ENCODE measurements at regions of chr2 and their contacts with region 1.

Region 1: GRCh38 chr2:145874466-145874865 is 1354.5 kb upstream of the ZEB2 start:
- DNase-seq: peak; percentile 16
- H3K4me3 ChIP-seq: no peak overlapping the region
- H3K27ac ChIP-seq: no peak overlapping the region
- H3K27me3 ChIP-seq: no peaks in the 10 kb centered on the region
- CTCF ChIP-seq: no peak

Region 2: DNA sequence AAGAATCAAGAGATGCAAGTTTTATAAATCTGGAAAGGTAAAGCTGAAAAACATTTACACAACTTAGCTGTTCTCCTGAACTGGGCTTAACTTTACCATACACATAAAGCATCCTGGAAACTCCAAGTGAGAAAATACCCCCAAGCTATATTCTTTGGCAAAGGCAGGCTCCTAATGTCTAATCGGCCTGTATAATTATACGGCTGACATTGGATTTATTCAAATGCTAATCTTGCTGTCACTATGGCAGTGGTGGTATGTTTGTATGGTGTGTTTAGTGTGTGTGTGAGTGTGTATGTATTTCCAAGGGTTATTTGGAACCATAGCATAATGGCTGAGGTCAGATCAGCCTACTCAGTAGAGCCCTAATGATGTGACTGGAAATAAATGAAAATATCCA is 322.8 kb before region 1 on chr2:
- CTCF ChIA-PET with region 1: no interaction called
- POLR2A ChIA-PET with region 1: no interaction called
- DNase-seq: no peak
- H3K4me3 ChIP-seq: no peak overlapping the region
- H3K27ac ChIP-seq: no peak overlapping the region
- H3K27me3 ChIP-seq: no peaks in the 10 kb centered on the region
- CTCF ChIP-seq: no peak

Region 3: DNA sequence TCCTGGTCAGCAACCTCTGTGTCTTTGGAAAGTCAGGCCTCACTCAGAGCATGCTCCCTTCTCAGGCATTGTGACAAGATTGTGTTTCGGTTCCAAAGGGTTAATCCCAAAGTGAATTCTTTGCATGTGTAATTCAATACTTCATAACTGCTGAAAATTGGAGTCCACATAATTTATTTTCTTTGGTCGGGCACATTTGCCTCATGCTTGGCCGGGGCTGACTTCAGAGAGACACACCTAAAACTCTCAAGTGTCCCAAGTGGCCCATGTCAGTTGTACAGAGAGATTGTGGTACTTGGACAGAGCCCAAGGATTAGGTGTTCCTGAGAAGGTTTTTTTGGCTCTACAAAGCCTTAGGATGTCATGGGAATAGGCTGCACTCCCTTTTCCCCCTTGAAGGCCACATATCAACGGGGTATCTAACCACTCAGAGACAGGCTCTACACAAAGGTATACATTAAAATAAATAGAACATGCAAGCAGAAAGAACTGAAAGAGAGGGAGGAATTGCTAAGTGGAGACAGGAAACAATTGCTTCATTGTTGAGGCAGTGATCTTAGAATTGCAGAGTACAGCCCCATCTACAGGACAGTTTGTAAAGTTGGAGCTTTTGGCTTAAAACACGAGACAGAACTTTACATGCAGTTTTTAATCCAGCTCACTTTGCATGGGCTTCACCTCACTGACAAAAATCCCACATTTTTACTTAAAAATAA is 122.2 kb before region 1 on chr2:
- CTCF ChIA-PET with region 1: no interaction called
- POLR2A ChIA-PET with region 1: no interaction called
- DNase-seq: peak; percentile 69
- H3K4me3 ChIP-seq: no peak overlapping the region
- H3K27ac ChIP-seq: no peak overlapping the region
- H3K27me3 ChIP-seq: no peaks in the 10 kb centered on the region
- CTCF ChIP-seq: peak; percentile 81

Region 4: DNA sequence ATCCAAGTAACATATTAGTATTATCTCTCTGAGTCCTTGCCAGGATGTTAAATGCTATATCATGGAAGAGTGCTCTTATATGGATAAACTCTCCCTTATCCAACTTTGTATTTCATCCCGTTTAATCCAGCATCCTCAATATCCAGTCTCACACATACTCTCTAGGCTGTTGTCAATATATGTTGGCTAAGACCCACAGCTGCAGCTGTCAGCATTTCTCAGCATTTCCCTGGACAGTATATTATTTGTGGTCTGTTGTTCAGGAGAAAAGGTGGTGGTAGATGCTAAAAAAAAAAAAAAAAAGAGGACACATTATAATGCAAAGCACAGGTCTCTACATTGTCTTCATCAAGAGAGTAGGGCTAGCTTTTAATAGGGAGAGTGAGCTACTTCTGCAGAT is 13.4 kb after region 1 on chr2:
- CTCF ChIA-PET with region 1: no interaction called
- POLR2A ChIA-PET with region 1: no interaction called
- DNase-seq: no peak
- H3K4me3 ChIP-seq: no peak overlapping the region
- H3K27ac ChIP-seq: no peak overlapping the region
- H3K27me3 ChIP-seq: no peaks in the 10 kb centered on the region
- CTCF ChIP-seq: no peak

Region 5: GRCh38 chr2:145961846-145962245 is 87.4 kb after region 1 on chr2:
- CTCF ChIA-PET with region 1: no interaction called
- POLR2A ChIA-PET with region 1: no interaction called
- DNase-seq: no peak
- H3K4me3 ChIP-seq: no peak overlapping the region
- H3K27ac ChIP-seq: no peak overlapping the region
- H3K27me3 ChIP-seq: no peaks in the 10 kb centered on the region
- CTCF ChIP-seq: no peak

Region 6: DNA sequence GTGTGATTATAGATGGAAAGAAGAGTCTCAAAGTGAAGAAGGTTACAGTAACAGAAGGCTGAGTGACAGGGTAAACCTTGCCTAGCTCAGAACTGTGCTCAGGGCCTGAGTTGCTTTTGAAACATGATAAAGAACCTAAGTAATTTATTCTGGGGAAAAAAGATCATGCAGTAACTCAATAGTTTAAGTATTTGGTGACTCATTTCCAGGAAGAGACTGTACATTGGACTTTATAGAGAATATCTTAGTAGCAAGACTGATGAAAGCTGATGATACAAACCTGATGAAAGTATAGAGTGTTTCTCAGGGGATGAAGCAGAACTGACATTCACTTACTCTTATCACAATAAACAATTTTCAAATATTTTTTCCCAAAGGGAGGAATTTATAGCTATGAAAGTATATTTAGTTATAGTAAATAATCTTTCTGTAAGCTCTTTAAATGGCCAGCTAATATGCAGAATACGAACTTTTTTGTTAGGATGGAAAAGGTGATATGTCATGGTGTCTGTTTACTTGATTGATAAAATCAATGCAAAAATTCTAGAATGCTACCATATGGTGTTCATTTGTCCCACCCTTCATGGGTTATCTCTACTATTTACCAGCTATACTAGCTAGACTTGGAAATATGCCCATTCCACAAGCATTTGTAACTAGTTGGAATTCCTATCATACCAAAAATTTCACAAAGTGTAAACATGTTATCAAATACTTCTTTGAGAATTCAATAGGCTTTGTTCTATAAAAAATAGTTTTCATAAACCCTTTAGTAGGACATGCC is 704.9 kb after region 1 on chr2:
- CTCF ChIA-PET with region 1: interaction called, 12 read pairs
- POLR2A ChIA-PET with region 1: no interaction called
- DNase-seq: peak; percentile 26
- H3K4me3 ChIP-seq: no peak overlapping the region
- H3K27ac ChIP-seq: peak overlapping the region; percentile 22
- H3K27me3 ChIP-seq: no peaks in the 10 kb centered on the region
- CTCF ChIP-seq: no peak